Left cardiac atrium (tissue), 4 donors: ENCODE measurements at regions of chr9 and their contacts with region 1.

Region 1: GRCh38 chr9:125143375-125144090 is at the start of gene SCAI:
- DNase-seq: peak; percentile 99
- ATAC-seq: peak; percentile 100
- total RNA-seq, gene SCAI: 5.6 to 5.8 TPM

Region 2: DNA sequence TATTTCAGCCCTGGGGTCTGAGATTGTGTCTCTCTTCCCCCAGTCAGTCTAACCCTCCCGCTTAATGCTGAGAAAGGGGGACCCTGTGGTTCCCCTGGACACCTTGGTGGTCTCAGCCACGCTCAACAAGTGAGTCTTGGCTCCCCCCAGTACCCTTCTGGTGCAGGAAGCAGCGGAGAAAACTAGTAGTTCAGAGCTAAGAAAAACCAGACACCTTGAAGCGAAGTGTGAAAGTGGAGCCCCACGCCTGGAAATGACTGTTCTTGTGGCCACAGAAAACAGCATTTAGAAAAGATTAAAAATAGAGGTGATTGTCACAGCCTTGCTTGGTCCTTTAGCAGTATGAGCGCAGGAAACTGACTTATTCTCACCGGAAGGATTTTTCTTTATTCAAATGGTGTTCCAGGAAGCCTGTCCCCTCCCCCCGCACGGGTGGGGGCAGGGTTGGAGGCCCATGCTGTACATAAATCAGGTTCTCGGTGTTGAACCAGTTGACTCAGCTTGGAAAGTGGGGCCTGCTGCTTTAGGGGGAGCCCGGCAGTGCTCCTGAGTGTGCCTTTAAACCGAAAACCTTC is 273.5 kb before region 1 on chr9:
- intact Hi-C with region 1: loop called in 1 of 2 experiments (anchors 10 kb)
- DNase-seq: peak; percentile 57
- ATAC-seq: peak in 1 of 2 donors; percentile 2

Region 3: GRCh38 chr9:124940693-124941453 is 202.7 kb before region 1 on chr9 and contains the start of gene GOLGA1:
- intact Hi-C with region 1: loop called in 1 of 2 experiments (anchors 5 kb)
- DNase-seq: peak; percentile 97
- ATAC-seq: peak; percentile 98
- total RNA-seq, gene GOLGA1: 17.8 to 18.9 TPM